Activated CD8-positive, alpha-beta T cell treated with anti-CD3 and anti-CD28 coated beads, Interleukin-2, amount 10 ng/mL, durations not matched to agents 7 days and 5 days (primary cell): ENCODE measurements at regions of chr1 and their contacts with region 1.

Region 1: DNA sequence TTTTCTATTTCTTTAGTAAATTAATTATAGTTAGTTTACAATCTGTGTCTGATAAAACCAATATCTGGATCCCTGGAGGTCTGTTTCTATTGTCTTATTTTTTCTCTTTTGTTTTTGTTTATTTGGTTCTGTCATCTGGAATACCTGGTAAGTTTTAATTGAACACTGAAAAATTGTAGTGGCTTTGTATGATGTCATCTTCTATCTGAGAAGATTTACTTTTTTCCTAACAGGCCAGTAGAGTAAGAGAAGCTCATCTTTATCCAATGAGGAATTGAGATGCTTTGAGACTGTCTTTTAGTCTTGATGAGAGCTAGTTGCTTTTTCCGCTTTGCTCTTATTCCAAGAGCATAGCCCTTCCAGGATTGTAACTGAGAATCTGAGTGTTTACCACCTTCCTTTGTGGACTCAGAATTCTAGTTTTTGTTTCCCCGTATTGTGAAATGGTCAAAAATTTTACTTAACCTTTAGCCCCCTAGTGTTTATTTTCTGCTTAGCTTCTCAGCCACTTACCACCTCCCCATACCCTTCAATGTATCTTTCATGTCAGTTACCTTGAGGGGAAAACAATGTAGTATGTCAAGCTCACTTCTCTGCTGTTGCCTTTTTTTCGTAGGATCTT is 25.0 kb downstream of the PTGFRN start:
- DNase-seq: peak; percentile 27
- ATAC-seq: peak; percentile 73
- H3K4me3 Mint-ChIP-seq: no peak overlapping the region
- H3K27ac Mint-ChIP-seq: peak overlapping the region; percentile 72
- H3K4me1 Mint-ChIP-seq: peaks cover 26% of the 10 kb centered on the region
- H3K27me3 Mint-ChIP-seq: peaks cover 2% of the 10 kb centered on the region

Region 2: DNA sequence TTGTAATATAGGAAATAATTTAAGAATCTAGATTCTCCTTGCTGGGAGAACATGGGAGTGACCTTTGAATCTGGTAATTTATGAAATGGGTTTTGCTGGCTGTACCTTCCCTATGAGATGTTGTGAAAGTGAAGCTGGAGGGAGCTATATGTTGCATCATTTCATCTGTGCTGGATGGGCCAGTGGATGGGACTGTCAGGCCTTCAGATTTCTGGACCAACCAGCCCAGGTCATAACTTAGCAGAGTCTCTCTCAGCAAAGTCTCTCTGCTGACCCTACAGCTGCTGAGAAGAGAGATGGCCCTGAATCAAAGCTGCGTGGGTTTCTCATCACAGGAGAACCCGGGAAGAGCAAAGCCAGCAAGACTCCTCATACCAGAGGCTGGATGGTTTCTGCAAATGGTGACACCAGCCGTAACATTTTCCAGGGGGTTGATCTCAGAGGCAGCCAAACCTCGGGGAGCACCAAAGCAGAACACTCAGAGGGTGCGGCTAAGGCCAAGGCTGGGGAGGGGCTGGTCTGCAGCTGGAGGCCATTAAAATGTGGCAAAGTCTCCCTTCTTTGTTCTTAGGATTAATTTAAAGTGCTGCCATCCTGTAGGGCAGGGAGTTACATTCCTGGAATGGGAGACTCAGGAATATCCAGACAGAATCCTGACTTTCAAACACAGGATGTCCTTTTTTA is 43.2 kb before region 1 on chr1:
- CTCF ChIA-PET with region 1: no interaction called
- POLR2A ChIA-PET with region 1: no interaction called
- DNase-seq: no peak
- ATAC-seq: no peak
- H3K4me3 Mint-ChIP-seq: no peak overlapping the region
- H3K27ac Mint-ChIP-seq: no peak overlapping the region
- H3K4me1 Mint-ChIP-seq: peaks cover 4% of the 10 kb centered on the region
- H3K27me3 Mint-ChIP-seq: peaks cover 6% of the 10 kb centered on the region

Region 3: DNA sequence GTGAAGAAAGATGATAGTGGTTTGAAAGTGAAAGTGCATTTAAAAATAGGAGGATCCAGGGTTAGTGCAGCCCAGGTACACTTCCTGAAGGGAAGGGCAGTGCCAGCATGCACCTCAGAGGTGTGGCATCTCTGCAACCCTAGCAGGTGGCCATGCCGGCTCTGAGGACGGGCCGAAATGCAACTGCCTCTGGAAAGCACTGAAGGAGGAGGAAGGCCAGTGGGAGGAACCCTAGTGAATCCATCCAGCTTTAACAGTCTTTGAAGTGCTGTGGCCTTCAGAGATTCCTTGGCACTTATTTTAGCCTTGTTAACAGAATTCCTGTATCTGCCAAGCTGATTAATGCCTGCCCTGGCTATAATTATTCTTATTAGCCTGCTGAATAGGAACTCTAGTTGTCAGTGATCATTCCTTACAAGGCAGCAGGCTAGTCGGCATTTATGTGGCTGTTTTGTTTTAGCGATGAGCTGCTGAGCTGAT is 19.5 kb before region 1 on chr1:
- CTCF ChIA-PET with region 1: interaction called, 14 read pairs
- POLR2A ChIA-PET with region 1: no interaction called
- DNase-seq: no peak
- ATAC-seq: no peak
- H3K4me3 Mint-ChIP-seq: peak overlapping the region; percentile 8
- H3K27ac Mint-ChIP-seq: no peak overlapping the region
- H3K4me1 Mint-ChIP-seq: peaks cover 17% of the 10 kb centered on the region
- H3K27me3 Mint-ChIP-seq: no peaks in the 10 kb centered on the region

Region 4: GRCh38 chr1:116951200-116951935 is 16.7 kb after region 1 on chr1:
- CTCF ChIA-PET with region 1: interaction called, 22 read pairs
- POLR2A ChIA-PET with region 1: no interaction called
- DNase-seq: no peak
- ATAC-seq: no peak
- H3K4me3 Mint-ChIP-seq: no peak overlapping the region
- H3K27ac Mint-ChIP-seq: no peak overlapping the region
- H3K4me1 Mint-ChIP-seq: no peaks in the 10 kb centered on the region
- H3K27me3 Mint-ChIP-seq: no peaks in the 10 kb centered on the region